ENCODE measurements at regions of chr1 and their contacts with region 1.

Region 1: GRCh38 chr1:198681831-198682759 is 43.3 kb downstream of the PTPRC start:
- DNase-seq: peak; percentile 91
- ATAC-seq: peak; percentile 86
- H3K4me3 ChIP-seq: peak overlapping the region; percentile 32; the same call in 1 of the 2 replicates
- H3K27ac ChIP-seq: peak overlapping the region; percentile 97
- H3K4me1 ChIP-seq: peaks cover 52% of the 10 kb centered on the region
- H3K27me3 ChIP-seq: no peaks in the 10 kb centered on the region
- CTCF ChIP-seq: no peak

Region 2: GRCh38 chr1:197915862-197916499 is 766.1 kb before region 1 on chr1:
- CTCF ChIA-PET with region 1: no interaction called
- POLR2A ChIA-PET with region 1: no interaction called
- intact Hi-C with region 1: loop called (anchors 10 kb)
- DNase-seq: peak; percentile 79
- ATAC-seq: peak; percentile 83
- H3K4me3 ChIP-seq: peak overlapping the region; percentile 81
- H3K27ac ChIP-seq: no peak overlapping the region
- H3K4me1 ChIP-seq: peaks cover 4% of the 10 kb centered on the region; the same call in 1 of the 2 replicates
- H3K27me3 ChIP-seq: no peaks in the 10 kb centered on the region
- CTCF ChIP-seq: peak; percentile 70

Region 3: GRCh38 chr1:198157241-198157846 is 524.8 kb before region 1 on chr1:
- CTCF ChIA-PET with region 1: interaction called, 5 read pairs
- POLR2A ChIA-PET with region 1: no interaction called
- intact Hi-C with region 1: loop called (anchors 5 kb)
- DNase-seq: peak; percentile 87
- ATAC-seq: peak; percentile 50
- H3K4me3 ChIP-seq: peak overlapping the region; percentile 81
- H3K27ac ChIP-seq: peak overlapping the region; percentile 38
- H3K4me1 ChIP-seq: peaks cover 32% of the 10 kb centered on the region
- H3K27me3 ChIP-seq: no peaks in the 10 kb centered on the region
- CTCF ChIP-seq: no peak

Region 4: DNA sequence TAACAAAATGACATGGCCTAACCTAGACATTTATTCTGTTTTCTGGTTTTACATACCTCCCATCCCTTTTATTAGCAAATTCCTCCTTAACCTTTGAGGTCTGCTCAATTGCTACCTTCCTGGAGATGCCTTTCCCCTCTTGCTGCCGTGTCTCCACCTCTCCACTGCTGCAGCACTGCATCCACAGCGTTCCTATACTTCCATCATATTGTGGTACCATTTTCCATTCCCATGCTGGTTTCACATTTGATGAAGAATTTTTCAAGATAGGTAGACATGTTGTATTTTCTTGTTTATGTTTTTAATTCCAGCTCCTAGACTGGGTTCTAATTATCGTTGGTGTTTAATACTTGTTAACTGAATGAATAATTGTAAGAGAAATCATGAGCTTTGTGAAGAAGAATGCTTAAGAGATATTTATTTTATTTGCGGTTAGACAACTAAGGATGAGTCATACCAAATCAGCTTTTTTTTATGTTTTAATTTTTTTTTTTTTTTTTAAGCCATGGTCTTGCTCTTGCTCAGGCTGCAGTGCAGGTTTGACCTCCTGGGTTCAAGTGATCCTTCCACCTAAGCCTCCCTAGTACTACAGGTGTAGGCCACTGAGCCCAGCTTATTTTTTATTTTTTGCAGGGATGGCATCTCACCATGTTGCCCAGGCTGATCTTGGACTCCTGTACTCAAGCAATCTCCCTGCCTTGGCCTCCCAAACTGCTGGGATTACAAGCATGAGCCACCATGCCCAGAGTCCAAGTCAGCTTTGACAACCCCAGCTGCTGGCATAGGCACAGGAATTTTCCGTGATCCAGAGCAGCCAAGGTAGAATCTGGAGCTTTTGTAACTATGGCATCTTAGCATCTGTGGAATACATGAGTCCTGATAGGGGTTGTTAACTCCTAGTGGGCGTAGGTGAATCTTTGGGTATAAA is 185.6 kb before region 1 on chr1:
- CTCF ChIA-PET with region 1: no interaction called
- POLR2A ChIA-PET with region 1: no interaction called
- intact Hi-C with region 1: loop called (anchors 1 kb)
- DNase-seq: peak; percentile 56
- ATAC-seq: peak; percentile 37
- H3K4me3 ChIP-seq: no peak overlapping the region
- H3K27ac ChIP-seq: peak overlapping the region; percentile 63
- H3K4me1 ChIP-seq: peaks cover 51% of the 10 kb centered on the region
- H3K27me3 ChIP-seq: no peaks in the 10 kb centered on the region
- CTCF ChIP-seq: no peak

Region 5: GRCh38 chr1:198575798-198576641 is 106.1 kb before region 1 on chr1:
- CTCF ChIA-PET with region 1: no interaction called
- POLR2A ChIA-PET with region 1: no interaction called
- intact Hi-C with region 1: loop called (anchors 1 kb)
- DNase-seq: peak; percentile 79
- ATAC-seq: peak; percentile 76
- H3K4me3 ChIP-seq: no peak overlapping the region
- H3K27ac ChIP-seq: peak overlapping the region; percentile 69
- H3K4me1 ChIP-seq: peaks cover 22% of the 10 kb centered on the region
- H3K27me3 ChIP-seq: no peaks in the 10 kb centered on the region
- CTCF ChIP-seq: no peak

Region 6: DNA sequence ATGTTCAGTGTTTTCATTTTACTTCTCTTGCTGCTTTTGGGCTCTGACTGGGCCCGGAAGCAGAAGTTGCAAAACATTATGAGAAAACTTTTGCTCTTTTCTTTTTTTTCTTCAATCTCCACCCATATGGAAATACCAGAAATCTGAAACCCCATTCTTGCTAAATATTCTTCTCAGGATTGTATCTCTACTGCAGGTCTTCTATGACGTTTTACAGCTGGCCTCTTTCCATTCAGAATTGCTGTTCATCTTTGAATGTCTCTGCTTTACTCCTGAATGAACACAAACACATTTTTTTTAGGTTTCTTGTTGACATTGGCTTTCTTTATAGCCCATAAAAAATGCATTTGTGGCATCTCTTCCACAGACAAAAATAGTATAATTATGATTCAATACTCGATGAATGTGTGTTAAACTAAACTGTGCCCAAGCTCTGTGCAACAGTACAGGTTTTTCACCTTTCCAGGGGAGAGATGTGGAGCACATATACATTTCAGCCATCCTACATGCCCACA is 24.5 kb before region 1 on chr1:
- CTCF ChIA-PET with region 1: interaction called, 7 read pairs
- POLR2A ChIA-PET with region 1: interaction called, 4 read pairs
- intact Hi-C with region 1: loop called (anchors 1 kb)
- DNase-seq: peak; percentile 97
- ATAC-seq: peak; percentile 85
- H3K4me3 ChIP-seq: peak overlapping the region; percentile 20; the same call in 1 of the 2 replicates
- H3K27ac ChIP-seq: peak overlapping the region; percentile 99
- H3K4me1 ChIP-seq: peaks cover 35% of the 10 kb centered on the region
- H3K27me3 ChIP-seq: no peaks in the 10 kb centered on the region
- CTCF ChIP-seq: no peak

Region 7: DNA sequence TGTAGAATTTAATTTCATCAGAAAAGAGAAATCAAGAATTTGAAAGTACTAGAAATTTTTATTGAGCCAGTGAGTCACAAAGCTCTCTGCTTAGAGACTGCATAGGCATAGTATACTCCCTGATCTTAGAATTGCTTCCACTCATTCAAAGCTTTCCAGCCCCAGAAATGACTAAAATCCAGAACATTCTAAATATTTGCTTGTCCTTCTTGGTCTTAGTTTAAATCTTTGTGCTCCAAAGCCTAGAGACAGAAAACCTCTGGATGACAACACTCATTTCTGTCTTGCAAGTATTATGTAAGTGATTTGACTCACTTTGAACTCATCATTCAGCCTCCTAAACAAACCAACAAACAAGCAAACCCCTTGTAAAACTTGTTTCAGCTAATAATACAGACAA is 31.0 kb after region 1 on chr1:
- CTCF ChIA-PET with region 1: no interaction called
- POLR2A ChIA-PET with region 1: no interaction called
- intact Hi-C with region 1: no loop called
- DNase-seq: peak; percentile 61
- ATAC-seq: peak; percentile 76
- H3K4me3 ChIP-seq: no peak overlapping the region
- H3K27ac ChIP-seq: peak overlapping the region; percentile 12; the same call in 1 of the 2 replicates
- H3K4me1 ChIP-seq: peaks cover 26% of the 10 kb centered on the region
- H3K27me3 ChIP-seq: no peaks in the 10 kb centered on the region
- CTCF ChIP-seq: no peak

Region 8: GRCh38 chr1:198929961-198930599 is 248.0 kb after region 1 on chr1:
- CTCF ChIA-PET with region 1: no interaction called
- POLR2A ChIA-PET with region 1: no interaction called
- intact Hi-C with region 1: no loop called
- DNase-seq: no peak
- ATAC-seq: no peak
- H3K4me3 ChIP-seq: 0 out of 2 replicates have a peak overlapping the region, but pooled peaks have one; percentile 10
- H3K27ac ChIP-seq: no peak overlapping the region
- H3K4me1 ChIP-seq: peaks cover 43% of the 10 kb centered on the region
- H3K27me3 ChIP-seq: no peaks in the 10 kb centered on the region
- CTCF ChIP-seq: no peak